ENCODE measurements at regions of chr2 and their contacts with region 1.

Region 1: DNA sequence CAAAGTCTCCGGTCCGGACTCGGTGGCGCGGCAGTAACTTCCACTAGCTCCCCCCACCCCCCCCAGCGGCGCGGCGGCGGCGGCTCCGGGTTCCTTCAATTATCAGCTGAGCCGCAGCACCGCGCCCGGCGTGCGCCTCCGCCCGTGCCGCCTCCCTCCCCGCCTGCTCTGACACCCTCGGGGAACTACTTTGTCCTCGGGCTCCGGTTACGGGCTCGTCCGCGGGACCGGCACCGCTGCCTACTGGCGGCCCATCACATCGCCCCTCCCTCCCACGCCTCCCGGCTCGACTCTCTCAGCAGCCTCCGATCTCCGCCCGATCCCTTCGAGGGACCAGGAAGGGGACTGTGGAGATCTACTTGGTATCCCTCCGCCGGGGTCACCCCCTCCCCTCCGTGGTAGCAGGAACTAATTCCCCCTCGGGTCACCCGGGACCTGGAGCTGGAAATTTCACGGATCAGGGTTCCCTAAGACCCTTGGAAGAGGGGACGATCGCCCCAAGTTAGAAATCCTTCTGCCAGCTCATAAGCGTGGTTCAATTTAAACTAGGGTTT is at the start of gene TRIP12:
- DNase-seq: peak; percentile 98
- H3K4me3 ChIP-seq: peak within 1 kb of the TSS; percentile 88
- H3K27ac ChIP-seq: peak within 1 kb of the TSS; percentile 97
- H3K4me1 ChIP-seq: no peaks in the 10 kb centered on the region
- H3K27me3 ChIP-seq: no peaks in the 10 kb centered on the region
- CTCF ChIP-seq: no peak
- total RNA-seq, gene TRIP12: 263 and 300 TPM in 2 replicates

Region 2: GRCh38 chr2:229539628-229540027 is 382.3 kb before region 1 on chr2:
- CTCF ChIA-PET with region 1: no interaction called
- POLR2A ChIA-PET with region 1: no interaction called
- intact Hi-C with region 1: no loop called
- DNase-seq: no peak
- H3K4me3 ChIP-seq: no peak overlapping the region
- H3K27ac ChIP-seq: no peak overlapping the region
- H3K4me1 ChIP-seq: no peaks in the 10 kb centered on the region
- H3K27me3 ChIP-seq: no peaks in the 10 kb centered on the region
- CTCF ChIP-seq: no peak

Region 3: DNA sequence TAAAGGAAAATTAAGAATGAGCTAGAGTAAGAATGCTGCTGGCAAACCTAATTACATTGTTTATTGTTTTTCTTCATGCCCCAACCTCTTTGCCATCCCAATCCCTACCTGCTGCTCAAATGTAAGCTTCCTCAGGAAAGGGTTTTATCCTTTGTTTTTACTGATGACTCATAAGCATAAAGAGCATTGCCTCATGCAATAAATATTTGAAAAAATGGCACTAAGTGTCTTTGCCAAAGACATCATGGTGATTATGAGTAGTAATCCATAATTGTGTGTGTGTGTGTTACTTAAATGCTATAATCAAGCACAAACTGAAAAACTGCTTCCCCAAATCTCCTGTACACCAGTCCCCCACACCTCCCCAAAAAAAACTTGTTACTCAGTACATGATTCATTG is 261.0 kb before region 1 on chr2:
- CTCF ChIA-PET with region 1: no interaction called
- POLR2A ChIA-PET with region 1: no interaction called
- intact Hi-C with region 1: no loop called
- DNase-seq: peak; percentile 13
- H3K4me3 ChIP-seq: no peak overlapping the region
- H3K27ac ChIP-seq: no peak overlapping the region
- H3K4me1 ChIP-seq: no peaks in the 10 kb centered on the region
- H3K27me3 ChIP-seq: no peaks in the 10 kb centered on the region
- CTCF ChIP-seq: no peak

Region 4: DNA sequence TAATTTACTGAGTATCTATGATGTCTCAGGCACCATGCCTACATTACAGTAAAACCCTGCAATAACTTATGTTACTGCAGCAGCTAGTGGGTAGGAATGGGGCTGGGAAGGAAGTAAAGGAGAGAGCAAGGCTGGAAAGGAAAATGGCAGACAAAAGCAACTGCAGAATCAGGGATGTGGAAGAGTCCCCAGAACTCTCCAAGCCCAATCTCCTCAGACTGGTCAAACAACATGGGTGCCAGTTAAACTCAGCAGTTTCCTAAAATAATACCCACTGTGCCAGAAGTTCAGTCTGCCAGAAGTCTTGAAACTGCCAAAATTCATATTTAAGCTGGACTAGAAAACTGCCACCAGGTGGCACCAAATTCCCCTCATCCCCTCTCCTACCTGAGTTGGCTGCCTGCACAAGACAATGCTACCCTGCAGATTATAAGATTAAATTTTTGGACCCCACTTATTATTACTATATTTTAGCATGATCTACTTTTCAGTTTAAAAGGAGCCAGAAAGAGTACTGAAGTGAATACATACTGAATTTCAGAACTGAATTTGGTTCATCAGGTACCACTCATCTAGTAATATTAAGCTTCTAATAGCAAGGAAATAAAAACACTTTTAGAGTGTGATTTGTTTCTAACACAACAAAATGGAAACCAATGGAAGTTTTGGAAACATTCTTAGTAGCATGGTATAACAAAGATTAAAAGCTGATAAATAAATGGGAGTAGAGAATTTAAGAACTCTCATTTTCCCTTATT is 120.8 kb before region 1 on chr2:
- CTCF ChIA-PET with region 1: interaction called, 3 read pairs
- POLR2A ChIA-PET with region 1: interaction called, 3 read pairs
- intact Hi-C with region 1: loop called (anchors 1 kb)
- DNase-seq: peak; percentile 74
- H3K4me3 ChIP-seq: no peak overlapping the region
- H3K27ac ChIP-seq: no peak overlapping the region
- H3K4me1 ChIP-seq: no peaks in the 10 kb centered on the region
- H3K27me3 ChIP-seq: no peaks in the 10 kb centered on the region
- CTCF ChIP-seq: peak; percentile 80

Region 5: GRCh38 chr2:231861532-231861931 is 1939.6 kb after region 1 on chr2:
- CTCF ChIA-PET with region 1: no interaction called
- POLR2A ChIA-PET with region 1: no interaction called
- intact Hi-C with region 1: no loop called
- DNase-seq: no peak
- H3K4me3 ChIP-seq: no peak overlapping the region
- H3K27ac ChIP-seq: no peak overlapping the region
- H3K4me1 ChIP-seq: no peaks in the 10 kb centered on the region
- H3K27me3 ChIP-seq: peaks cover 30% of the 10 kb centered on the region
- CTCF ChIP-seq: no peak

Measured in A673 (cell line).